ENCODE measurements at regions of chr12 and their contacts with region 1.

Region 1: DNA sequence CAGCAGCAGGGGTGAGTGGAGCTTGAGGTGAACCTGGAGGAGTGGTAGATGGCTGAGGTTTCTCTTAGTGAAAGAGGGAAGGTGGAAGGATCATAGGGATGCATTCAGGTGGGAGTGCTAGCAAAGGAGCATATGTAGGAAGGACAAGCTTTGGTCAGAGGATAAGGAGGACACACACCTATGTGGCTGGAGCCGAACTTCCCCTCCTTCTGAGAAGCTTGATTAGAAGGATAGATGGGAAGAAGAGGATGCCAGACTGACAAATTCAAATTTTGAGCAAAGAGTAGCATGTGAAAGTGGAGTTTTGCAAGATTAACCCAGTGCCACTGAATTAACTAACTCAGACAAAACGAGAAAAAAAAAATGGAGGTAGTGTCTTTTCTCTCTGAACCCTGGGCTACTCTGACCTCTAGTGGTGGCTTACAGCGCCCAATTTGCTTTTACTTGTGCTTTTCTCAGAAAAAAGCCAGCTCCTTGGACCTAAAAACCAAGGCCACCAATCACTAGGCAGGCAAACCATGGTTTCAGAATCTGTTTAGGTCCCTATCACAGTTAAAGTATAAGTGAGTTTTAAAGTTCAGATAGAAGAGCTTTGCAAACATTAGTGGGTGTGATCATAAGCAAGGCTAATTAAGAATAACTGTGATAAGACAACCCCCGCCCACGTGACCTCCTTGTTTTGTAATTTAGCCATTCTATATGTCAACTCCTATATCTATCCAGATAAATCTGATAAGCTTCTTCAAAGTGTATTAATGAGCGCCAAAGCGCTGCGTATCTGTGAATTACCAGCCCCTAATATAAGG is 15.5 kb downstream of the EMP1 start:
- DNase-seq: peak; percentile 62
- H3K4me3 Mint-ChIP-seq: no peak overlapping the region
- H3K27ac Mint-ChIP-seq: peak overlapping the region; percentile 41
- H3K4me1 Mint-ChIP-seq: peaks cover 53% of the 10 kb centered on the region
- H3K27me3 Mint-ChIP-seq: no peaks in the 10 kb centered on the region

Region 2: GRCh38 chr12:12837025-12837872 is 374.8 kb before region 1 on chr12:
- intact Hi-C with region 1: loop called (anchors 2 kb)
- DNase-seq: no peak
- H3K4me3 Mint-ChIP-seq: no peak overlapping the region
- H3K27ac Mint-ChIP-seq: peak overlapping the region; percentile 54
- H3K4me1 Mint-ChIP-seq: peaks cover 24% of the 10 kb centered on the region
- H3K27me3 Mint-ChIP-seq: no peaks in the 10 kb centered on the region

Region 3: GRCh38 chr12:12916135-12916944 is 295.7 kb before region 1 on chr12:
- intact Hi-C with region 1: loop called (anchors 1 kb)
- DNase-seq: peak; percentile 76
- H3K4me3 Mint-ChIP-seq: no peak overlapping the region
- H3K27ac Mint-ChIP-seq: no peak overlapping the region
- H3K4me1 Mint-ChIP-seq: peaks cover 11% of the 10 kb centered on the region
- H3K27me3 Mint-ChIP-seq: peaks cover 14% of the 10 kb centered on the region

Region 4: GRCh38 chr12:13023811-13024530 is 188.1 kb before region 1 on chr12:
- intact Hi-C with region 1: loop called (anchors 1 kb)
- DNase-seq: no peak
- H3K4me3 Mint-ChIP-seq: no peak overlapping the region
- H3K27ac Mint-ChIP-seq: no peak overlapping the region
- H3K4me1 Mint-ChIP-seq: no peaks in the 10 kb centered on the region
- H3K27me3 Mint-ChIP-seq: peaks cover 39% of the 10 kb centered on the region

Region 5: DNA sequence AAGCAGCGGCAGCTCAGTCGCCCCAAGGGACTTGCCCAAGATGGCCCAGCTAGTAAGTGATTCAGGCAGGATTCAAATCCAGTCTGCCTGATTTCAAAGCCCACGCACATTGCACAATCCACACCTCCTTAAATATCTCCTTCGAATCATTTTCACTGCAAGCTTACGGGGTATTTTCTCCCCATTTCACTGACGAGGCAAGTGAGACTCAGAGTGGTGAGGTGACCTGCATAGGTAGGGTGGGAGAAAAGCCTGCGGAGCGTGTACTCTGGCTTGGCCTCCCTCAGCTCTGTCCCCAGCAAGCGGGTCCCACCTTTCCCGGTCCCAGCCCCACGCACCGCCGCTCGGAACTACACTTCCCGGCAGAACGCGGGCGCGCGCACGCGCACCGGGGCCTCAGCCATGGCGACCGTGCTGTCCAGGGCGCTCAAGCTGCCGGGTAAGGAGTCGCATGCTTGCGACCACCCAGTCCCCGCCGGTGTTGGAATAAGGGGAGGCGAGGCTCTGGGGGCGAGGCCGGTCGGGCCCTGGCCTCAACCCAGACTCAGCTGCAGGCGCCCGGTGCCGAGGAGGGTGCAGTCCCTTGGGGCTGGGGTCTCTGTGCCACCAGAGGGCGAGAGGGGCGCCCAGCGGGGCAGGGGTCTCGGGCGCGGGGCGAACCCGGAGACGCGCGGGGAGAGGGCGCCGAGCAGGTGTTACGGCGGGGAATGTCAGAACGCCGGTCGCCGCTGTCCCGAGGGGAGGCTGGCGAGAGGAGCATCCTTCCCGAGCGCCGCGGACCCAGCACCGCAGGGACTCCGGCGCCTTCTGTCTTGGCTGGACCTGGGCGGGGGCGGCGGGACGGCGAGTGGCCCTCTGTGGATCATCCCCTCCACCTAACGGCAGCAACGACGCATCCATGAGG is 167.8 kb before region 1 on chr12 and contains the start of gene FAM234B:
- intact Hi-C with region 1: loop called (anchors 1 kb)
- DNase-seq: peak; percentile 62
- H3K4me3 Mint-ChIP-seq: peak within 1 kb of the TSS; percentile 83
- H3K27ac Mint-ChIP-seq: peak within 1 kb of the TSS; percentile 66
- H3K4me1 Mint-ChIP-seq: peaks cover 4% of the 10 kb centered on the region
- H3K27me3 Mint-ChIP-seq: peaks cover 19% of the 10 kb centered on the region
- total RNA-seq, gene FAM234B: 6.0 and 6.6 TPM in 2 replicates

Region 6: GRCh38 chr12:13173012-13173932 is 38.8 kb before region 1 on chr12:
- intact Hi-C with region 1: loop called (anchors 1 kb)
- DNase-seq: peak; percentile 12
- H3K4me3 Mint-ChIP-seq: no peak overlapping the region
- H3K27ac Mint-ChIP-seq: peak overlapping the region; percentile 51
- H3K4me1 Mint-ChIP-seq: peaks cover 25% of the 10 kb centered on the region
- H3K27me3 Mint-ChIP-seq: peaks cover 41% of the 10 kb centered on the region